ENCODE measurements at regions of chr10 and their contacts with region 1.

Region 1: GRCh38 chr10:67520924-67521520 is 175.0 kb downstream of the CTNNA3 start:
- DNase-seq: peak; percentile 2
- ATAC-seq: peak; percentile 97
- H3K4me3 ChIP-seq: no peak overlapping the region
- H3K27ac ChIP-seq: no peak overlapping the region
- H3K4me1 ChIP-seq: no peaks in the 10 kb centered on the region
- H3K27me3 ChIP-seq: no peaks in the 10 kb centered on the region
- CTCF ChIP-seq: peak; percentile 65 to 85 (median 74)
- EP300 ChIP-seq: no peak
- POLR2A ChIP-seq: no peak
- RAD21 ChIP-seq: peak; percentile 89

Region 2: GRCh38 chr10:66931340-66931948 is 589.6 kb before region 1 on chr10:
- CTCF ChIA-PET with region 1: interaction called, 80 read pairs
- POLR2A ChIA-PET with region 1: no interaction called
- RAD21 ChIA-PET with region 1: interaction called, 12 read pairs
- SMC1A ChIA-PET with region 1: interaction called, 24 read pairs
- in situ Hi-C with region 1: no loop called
- intact Hi-C with region 1: loop called (anchors 5 kb)
- DNase-seq: peak; percentile 8
- ATAC-seq: peak; percentile 79
- H3K4me3 ChIP-seq: no peak overlapping the region
- H3K27ac ChIP-seq: no peak overlapping the region
- H3K4me1 ChIP-seq: no peaks in the 10 kb centered on the region
- H3K27me3 ChIP-seq: peaks cover 0 to 8% of the 10 kb centered on the region in 2 experiments; a peak in 1 of 4 replicates
- CTCF ChIP-seq: peak; percentile 65 to 72 (median 65)
- EP300 ChIP-seq: no peak
- POLR2A ChIP-seq: no peak
- RAD21 ChIP-seq: peak; percentile 82

Region 3: DNA sequence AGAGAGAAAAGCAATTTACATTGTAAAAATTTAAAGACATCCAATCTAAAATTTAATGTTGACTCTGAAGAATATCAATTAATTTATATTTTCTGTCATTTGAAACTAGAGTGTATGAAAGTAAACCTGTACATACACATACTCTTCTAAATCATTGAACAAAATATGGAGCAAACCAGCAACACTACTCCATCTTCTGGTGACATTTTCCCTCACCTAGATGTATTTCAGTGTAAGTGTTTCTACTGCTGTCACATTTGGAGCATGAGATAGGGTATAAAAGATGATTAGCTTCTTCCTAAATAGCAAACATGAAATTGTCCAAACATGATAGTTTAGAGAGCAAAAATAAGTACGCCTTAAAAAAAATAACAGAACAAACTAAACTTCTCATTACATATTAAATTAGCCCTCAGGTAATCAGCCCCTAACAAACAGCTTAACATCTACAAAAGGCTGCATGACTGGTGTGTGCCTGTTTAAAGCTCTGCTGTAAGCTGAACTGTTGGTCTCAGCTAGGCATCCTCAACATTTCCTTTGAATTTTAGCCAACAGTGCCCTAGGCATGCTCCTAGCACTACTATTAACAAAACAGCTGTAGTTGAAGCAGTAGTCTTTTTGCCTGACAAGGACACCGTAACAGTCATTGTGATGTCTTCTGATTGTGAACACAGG is 14.8 kb before region 1 on chr10:
- CTCF ChIA-PET with region 1: interaction called, 13 read pairs
- POLR2A ChIA-PET with region 1: no interaction called
- RAD21 ChIA-PET with region 1: interaction called, 10 read pairs
- SMC1A ChIA-PET with region 1: interaction called, 19 read pairs
- in situ Hi-C with region 1: no loop called
- intact Hi-C with region 1: no loop called
- DNase-seq: no peak
- ATAC-seq: no peak
- H3K4me3 ChIP-seq: no peak overlapping the region
- H3K27ac ChIP-seq: no peak overlapping the region
- H3K4me1 ChIP-seq: no peaks in the 10 kb centered on the region
- H3K27me3 ChIP-seq: no peaks in the 10 kb centered on the region
- CTCF ChIP-seq: no peak
- EP300 ChIP-seq: no peak
- POLR2A ChIP-seq: no peak
- RAD21 ChIP-seq: no peak

Region 4: GRCh38 chr10:67549390-67549789 is 28.4 kb after region 1 on chr10:
- CTCF ChIA-PET with region 1: interaction called, 12 read pairs
- POLR2A ChIA-PET with region 1: interaction called, 4 read pairs
- RAD21 ChIA-PET with region 1: interaction called, 6 read pairs
- SMC1A ChIA-PET with region 1: interaction called, 10 read pairs
- in situ Hi-C with region 1: no loop called
- intact Hi-C with region 1: no loop called
- DNase-seq: no peak
- ATAC-seq: no peak
- H3K4me3 ChIP-seq: no peak overlapping the region
- H3K27ac ChIP-seq: no peak overlapping the region
- H3K4me1 ChIP-seq: no peaks in the 10 kb centered on the region
- H3K27me3 ChIP-seq: no peaks in the 10 kb centered on the region
- CTCF ChIP-seq: no peak
- EP300 ChIP-seq: no peak
- POLR2A ChIP-seq: no peak
- RAD21 ChIP-seq: no peak

Region 5: GRCh38 chr10:67666416-67667034 is 145.5 kb after region 1 on chr10:
- CTCF ChIA-PET with region 1: interaction called, 11 read pairs
- POLR2A ChIA-PET with region 1: no interaction called
- RAD21 ChIA-PET with region 1: interaction called, 30 read pairs
- SMC1A ChIA-PET with region 1: interaction called, 6 read pairs
- in situ Hi-C with region 1: no loop called
- intact Hi-C with region 1: loop called (anchors 5 kb)
- DNase-seq: no peak
- ATAC-seq: peak; percentile 63
- H3K4me3 ChIP-seq: no peak overlapping the region
- H3K27ac ChIP-seq: no peak overlapping the region
- H3K4me1 ChIP-seq: no peaks in the 10 kb centered on the region
- H3K27me3 ChIP-seq: no peaks in the 10 kb centered on the region
- CTCF ChIP-seq: peak; percentile 12 to 53 (median 25); a peak in 3 of 6 replicates
- EP300 ChIP-seq: no peak
- POLR2A ChIP-seq: no peak
- RAD21 ChIP-seq: peak; percentile 59

Measured in GM12878 (cell line).